ENCODE measurements at regions of chr1 and their contacts with region 1.

Region 1: GRCh38 chr1:228165372-228166169 is at the start of gene IBA57:
- DNase-seq: peak; percentile 93 to 100
- H3K4me3 ChIP-seq: peak within 1 kb of the TSS; percentile 88
- H3K27ac ChIP-seq: peak within 1 kb of the TSS; percentile 89
- H3K4me1 ChIP-seq: peaks cover 13% of the 10 kb centered on the region
- H3K27me3 ChIP-seq: no peaks in the 10 kb centered on the region
- CTCF ChIP-seq: peak; percentile 79
- total RNA-seq, gene IBA57: 7.8 and 13.8 TPM in 2 replicates

Region 2: DNA sequence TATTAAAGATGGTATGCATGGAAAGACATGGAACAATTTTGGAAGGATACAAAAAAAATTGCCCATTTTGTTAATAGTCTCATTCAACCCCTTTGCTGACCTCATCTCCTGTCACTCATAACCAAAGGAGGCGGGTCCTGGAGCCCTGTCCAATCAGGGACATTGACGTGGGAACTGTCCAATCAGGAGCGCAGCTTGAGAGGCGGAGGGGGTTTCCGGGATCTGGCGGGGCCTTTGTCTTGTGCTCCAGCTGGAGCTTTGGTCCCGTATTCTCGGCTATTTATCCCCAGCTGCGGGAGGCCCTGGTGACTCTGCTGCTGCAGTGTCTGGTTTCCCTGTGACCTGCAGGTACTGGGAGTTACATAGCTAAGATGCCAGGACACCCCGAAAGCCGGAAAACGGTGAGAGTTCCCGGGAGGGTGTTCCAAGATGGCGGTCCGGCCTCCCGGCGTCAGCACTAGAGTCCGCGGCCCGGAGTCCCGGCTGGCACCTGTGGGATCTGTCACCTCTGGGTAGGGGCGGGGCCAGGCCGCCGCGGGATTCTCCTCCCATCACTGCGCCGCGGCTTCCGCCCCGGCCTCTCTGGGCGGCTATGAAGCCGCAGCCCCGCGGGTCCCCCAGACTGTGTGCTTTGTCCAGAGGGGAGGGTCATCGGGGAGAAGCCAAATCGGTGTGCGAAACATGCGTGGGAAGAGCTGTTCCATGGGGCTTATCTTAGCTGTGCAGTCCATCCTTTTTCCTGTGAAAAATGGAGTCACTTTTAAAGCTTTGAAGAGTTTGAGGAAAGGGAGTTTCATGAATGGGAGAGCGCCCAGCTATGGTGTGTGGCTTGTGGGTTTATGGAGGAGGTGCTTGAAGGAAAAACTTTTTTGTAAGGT is 602.0 kb before region 1 on chr1 and contains the start of gene ZNF678:
- CTCF ChIA-PET with region 1: no interaction called
- POLR2A ChIA-PET with region 1: no interaction called
- intact Hi-C with region 1: loop called (anchors 5 kb)
- DNase-seq: peak; percentile 85 to 94
- H3K4me3 ChIP-seq: peak within 1 kb of the TSS; percentile 76
- H3K27ac ChIP-seq: peak within 1 kb of the TSS; percentile 78
- H3K4me1 ChIP-seq: peaks cover 4% of the 10 kb centered on the region; the same call in 1 of the 2 replicates
- H3K27me3 ChIP-seq: no peaks in the 10 kb centered on the region
- CTCF ChIP-seq: no peak
- total RNA-seq, gene ZNF678: 4.1 and 6.1 TPM in 2 replicates

Region 3: DNA sequence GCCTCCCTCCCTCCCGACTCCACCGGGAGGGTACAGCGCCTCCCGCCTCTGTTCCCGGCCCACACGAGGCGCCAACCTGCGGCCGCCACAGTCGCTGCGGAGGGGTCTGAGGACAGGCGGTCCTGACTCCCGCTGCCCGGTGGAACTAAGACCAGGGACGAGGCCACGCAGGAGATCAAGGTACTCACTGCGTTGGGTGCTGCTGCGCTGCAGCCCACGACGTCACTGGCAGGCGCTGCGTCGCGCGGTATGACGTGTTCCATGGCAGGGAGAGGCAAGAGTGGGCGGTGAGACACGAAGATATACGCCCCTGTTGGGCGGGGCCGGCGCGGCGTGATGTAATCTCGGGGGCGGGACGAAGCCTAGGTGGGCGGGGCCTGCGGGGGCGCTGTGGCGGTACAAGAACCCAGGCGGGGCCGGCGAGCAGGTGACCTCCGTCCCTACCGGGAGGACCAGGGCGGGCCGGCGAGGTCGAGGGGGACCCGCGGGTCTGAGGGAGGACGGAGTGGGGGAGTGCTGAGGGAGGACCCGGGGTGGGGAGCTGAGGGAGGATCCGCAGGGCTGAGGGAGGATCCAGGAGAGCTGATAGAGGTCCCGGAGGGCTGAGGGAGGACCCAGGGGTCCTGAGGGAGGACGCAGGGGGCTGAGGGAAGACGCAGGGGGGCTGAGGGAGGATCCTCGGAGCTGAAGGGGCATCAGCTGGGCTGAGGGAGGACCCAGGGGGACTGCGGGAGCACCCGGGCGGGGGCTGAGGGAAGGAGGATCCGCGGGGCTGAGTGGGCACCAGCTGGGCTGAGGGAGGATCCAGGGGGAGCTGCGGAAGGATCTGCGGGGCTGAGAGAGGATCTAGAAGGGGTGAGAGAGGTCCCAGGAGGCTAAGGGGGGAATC is 56.3 kb before region 1 on chr1 and contains the start of gene MRPL55:
- CTCF ChIA-PET with region 1: no interaction called
- POLR2A ChIA-PET with region 1: interaction called, 4 read pairs
- intact Hi-C with region 1: loop called (anchors 1 kb)
- DNase-seq: peak; percentile 90 to 99
- H3K4me3 ChIP-seq: peak within 1 kb of the TSS; percentile 97
- H3K27ac ChIP-seq: no peak within 1 kb of the TSS
- H3K4me1 ChIP-seq: peaks cover 6% of the 10 kb centered on the region
- H3K27me3 ChIP-seq: no peaks in the 10 kb centered on the region
- CTCF ChIP-seq: no peak
- total RNA-seq, gene MRPL55: 81.0 and 84.4 TPM in 2 replicates

Region 4: DNA sequence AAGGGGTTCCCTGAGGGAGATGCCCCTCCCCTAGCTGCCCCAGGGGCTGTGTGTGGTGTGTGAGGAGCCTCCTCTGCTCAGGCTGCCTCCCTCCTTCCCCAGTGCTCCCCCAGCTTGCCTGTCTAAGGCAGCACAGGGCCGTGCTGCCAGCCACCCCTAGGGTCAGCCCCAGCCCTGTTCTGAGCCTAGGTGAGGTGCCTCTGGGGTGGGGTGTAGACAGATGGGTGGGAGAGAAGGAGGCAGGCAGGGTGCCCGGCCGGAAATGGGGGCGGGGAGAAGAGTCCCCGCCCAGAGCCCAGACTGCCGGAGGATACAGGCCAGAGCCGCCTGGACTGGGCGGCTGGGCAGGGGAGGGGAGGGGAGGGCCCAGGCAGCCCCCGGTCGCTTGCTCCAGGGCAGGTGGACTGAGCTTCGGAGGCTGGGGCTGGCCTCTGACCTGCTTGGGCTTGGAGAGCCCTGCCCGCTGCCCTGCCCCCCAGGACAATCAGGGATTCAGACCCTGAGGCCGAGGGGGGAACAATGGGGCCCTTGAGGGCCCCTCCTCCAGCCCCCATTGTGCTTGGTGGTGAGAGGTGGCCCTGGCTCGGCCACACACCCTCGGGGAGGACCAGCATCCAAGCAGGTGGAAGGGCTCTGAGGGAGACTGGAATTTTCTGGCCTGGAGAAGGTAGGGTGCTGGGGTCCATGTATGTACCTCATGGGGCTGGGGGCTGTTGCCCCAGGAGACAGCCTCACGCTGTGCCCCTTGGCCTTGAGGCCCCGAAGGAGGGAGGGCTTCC is 16.0 kb before region 1 on chr1 and contains the start of gene GJC2:
- CTCF ChIA-PET with region 1: interaction called, 8 read pairs
- POLR2A ChIA-PET with region 1: no interaction called
- intact Hi-C with region 1: loop called (anchors 2 kb)
- DNase-seq: peak in 1 of 2 experiments; percentile 77
- H3K4me3 ChIP-seq: no peak within 1 kb of the TSS
- H3K27ac ChIP-seq: no peak within 1 kb of the TSS
- H3K4me1 ChIP-seq: no peaks in the 10 kb centered on the region
- H3K27me3 ChIP-seq: no peaks in the 10 kb centered on the region
- CTCF ChIP-seq: no peak
- total RNA-seq, gene GJC2: 2.1 and 3.4 TPM in 2 replicates

Region 5: DNA sequence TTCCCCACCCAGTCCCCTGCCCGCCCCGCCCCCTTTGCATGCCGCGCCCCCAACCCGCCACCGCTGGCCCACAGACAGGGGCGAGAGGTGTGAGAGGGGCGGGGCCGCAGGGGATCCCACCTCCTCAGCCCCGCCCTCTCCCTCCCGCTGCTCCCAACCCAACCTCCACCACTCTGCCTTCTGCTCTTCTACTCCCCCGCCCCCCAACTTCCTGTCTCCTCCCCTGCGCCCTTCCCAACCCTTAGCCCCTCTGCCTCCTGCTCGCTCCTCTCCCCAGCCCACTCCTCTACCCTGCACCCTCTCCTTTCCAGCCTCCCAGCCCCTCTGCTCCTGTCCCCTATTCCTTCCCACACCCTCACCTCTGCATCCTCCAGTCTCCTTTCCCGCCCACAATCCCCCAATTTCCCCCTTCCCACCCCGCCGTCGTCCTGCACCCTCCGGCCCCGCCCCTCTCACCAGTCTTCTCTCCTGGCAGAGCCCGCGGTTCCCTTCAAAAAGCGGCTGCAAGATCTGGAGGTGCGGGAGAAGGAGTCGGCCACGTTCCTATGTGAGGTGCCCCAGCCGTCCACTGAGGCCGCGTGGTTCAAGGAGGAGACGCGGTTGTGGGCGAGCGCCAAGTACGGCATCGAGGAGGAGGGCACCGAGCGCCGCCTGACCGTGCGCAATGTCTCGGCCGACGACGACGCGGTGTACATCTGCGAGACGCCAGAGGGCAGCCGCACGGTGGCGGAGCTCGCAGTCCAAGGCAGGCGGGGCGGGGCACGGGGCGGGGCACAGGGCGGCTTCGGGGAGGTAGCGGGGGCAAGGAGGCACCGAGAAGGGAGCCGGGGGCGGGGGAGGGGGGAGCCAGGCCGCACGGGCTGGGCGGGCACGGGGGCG is 47.6 kb after region 1 on chr1:
- CTCF ChIA-PET with region 1: interaction called, 10 read pairs
- POLR2A ChIA-PET with region 1: interaction called, 3 read pairs
- intact Hi-C with region 1: loop called (anchors 1 kb)
- DNase-seq: peak; percentile 71 to 88
- H3K4me3 ChIP-seq: peak overlapping the region; percentile 62
- H3K27ac ChIP-seq: no peak overlapping the region
- H3K4me1 ChIP-seq: peaks cover 9% of the 10 kb centered on the region
- H3K27me3 ChIP-seq: no peaks in the 10 kb centered on the region
- CTCF ChIP-seq: peak; percentile 60

Region 6: DNA sequence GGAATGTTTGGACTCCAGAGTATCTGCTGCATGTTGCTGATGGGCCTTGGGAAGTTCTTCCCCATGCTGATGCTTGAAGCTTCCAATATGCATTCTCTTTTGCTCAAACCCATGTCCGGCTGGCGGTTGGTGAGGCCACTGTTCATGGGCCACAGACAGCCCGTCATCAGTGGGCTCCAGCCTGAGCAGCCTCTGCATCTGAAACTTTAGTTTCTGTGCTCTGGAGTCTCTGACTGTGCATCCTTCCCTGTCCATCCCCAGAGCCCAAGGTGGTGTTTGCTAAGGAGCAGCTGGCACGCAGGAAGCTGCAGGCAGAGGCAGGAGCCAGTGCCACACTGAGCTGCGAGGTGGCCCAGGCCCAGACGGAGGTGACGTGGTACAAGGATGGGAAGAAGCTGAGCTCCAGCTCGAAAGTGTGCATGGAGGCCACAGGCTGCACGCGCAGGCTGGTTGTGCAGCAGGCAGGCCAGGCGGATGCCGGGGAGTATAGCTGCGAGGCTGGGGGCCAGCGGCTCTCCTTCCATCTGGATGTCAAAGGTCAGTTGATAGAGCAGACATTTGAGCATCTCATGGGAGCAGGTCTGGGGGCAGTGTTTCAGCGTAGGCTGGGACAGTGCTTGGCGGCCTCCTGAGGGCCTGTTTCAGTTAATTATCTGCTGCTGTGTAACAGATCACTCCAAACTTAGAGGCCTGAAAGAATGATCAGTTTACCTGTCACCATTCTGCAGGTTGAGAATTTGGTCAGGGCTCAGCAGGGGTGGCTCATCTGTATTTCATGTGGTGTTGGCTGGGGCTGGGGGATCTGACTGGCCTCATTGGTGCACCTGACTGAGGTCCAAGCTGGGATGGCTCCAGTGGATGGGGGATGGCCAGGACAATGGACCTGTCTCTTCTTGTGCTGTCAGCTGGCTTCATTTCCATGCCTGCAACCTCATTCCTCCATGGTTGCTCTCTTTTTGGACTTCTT is 58.9 kb after region 1 on chr1:
- CTCF ChIA-PET with region 1: no interaction called
- POLR2A ChIA-PET with region 1: no interaction called
- intact Hi-C with region 1: no loop called
- DNase-seq: no peak
- H3K4me3 ChIP-seq: no peak overlapping the region
- H3K27ac ChIP-seq: no peak overlapping the region
- H3K4me1 ChIP-seq: peaks cover 19% of the 10 kb centered on the region
- H3K27me3 ChIP-seq: no peaks in the 10 kb centered on the region
- CTCF ChIP-seq: no peak